GM13977 (cell line): ENCODE measurements at regions of chr14 and their contacts with region 1.

Region 1: DNA sequence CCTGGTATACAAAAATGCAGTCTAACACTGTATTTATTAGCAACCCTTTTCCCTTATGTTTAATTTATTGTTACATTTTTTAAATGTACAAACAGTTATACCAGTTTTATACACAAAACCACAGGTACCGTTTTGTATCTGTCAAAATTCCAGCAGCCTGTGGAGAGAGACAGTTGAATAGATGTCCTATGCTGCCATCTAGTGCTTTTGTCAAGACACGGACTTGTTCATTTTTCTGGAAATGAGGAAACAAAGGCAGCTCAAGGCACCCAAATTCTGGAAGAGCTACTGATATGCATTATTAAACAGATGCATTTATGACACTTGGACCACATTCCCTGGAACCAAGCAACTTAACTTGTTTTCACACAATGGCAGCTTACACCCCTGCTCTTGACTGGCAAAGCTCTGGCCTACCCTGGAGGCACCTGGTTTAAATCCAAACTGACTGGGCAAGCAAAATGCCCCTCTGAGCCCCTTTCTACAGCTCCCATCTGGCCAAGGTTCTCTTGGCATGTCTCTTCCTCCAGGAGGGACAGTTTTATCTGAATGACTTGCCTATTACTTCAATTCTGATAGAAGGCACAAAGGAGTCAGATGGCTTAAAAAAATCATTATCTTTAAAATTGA is 286.9 kb upstream of the PRKD1 start:
- DNase-seq: peak; percentile 6
- CTCF ChIP-seq: peak; percentile 54

Region 2: DNA sequence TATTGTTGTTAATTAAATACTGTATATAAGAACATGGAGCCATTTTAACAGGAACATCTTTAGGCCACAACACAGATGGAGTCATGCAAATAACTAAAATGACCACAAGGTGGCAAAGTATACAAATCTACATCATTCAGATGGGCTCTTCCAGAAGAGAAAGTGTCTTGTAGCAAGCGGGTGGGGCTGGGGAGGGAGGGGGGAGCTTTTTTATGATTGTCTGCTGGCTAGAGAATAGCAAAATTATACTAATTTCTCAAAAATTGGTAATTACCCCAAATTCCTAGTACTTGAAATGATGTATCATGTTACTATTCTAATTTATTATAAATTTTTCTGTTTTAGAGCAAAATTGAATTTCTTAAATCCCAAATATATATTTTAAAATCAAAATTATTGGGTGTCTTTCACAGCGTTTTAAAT is 665.6 kb before region 1 on chr14:
- in situ Hi-C with region 1: loop called (anchors 25 kb)
- DNase-seq: peak; percentile 34
- CTCF ChIP-seq: peak; percentile 60

Region 3: DNA sequence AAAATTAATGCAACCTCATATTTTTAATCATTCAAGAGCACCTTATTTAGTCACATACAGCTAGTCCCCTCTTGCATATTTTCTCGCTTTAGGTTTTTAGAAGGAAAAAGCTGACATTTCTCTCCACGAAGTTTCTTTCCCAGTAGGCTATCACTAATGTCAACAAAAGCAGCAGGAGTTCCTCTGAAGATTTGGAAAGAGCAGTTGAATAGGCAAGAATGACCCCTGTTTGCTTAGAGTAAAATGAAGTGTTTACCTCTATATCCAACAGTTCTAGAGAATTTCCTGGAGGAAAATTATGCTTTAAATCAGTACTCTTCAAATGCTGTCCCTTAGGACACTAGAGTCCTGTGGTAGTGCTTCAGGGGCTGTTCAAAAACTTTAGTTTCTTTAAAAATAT is 98.8 kb before region 1 on chr14:
- in situ Hi-C with region 1: no loop called
- DNase-seq: no peak
- CTCF ChIP-seq: no peak

Region 4: DNA sequence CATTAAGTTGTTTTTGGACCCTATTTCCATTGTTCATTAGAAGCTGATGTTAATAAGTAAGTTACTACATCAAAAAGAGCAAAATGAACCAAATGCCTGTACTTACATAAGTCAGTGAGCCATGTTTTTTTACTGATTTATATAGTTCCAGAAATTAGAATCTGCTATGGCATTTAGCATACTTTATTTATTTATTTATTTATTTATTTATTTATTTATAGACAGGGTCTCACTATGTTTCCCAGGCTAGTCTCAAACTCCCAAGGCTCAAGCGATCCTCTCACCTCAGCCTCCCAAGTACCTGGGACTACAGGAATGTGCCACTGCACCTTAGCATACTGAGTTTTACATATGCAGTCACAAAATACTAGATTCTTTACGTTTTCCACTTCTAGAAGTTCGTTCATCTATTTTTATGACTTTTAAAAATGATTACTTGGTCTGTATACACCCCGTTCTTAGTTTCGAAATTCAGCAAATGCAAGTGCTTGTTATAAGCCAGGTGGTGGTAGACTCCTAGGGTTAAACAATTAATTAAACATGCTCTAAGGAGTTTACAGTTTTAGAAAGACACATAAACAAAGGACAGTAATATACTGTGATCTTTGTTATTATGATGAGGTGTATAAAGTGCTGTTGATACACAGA is 477.3 kb after region 1 on chr14:
- in situ Hi-C with region 1: no loop called
- DNase-seq: no peak
- CTCF ChIP-seq: no peak